ENCODE measurements at regions of chr2 and their contacts with region 1.

Region 1: DNA sequence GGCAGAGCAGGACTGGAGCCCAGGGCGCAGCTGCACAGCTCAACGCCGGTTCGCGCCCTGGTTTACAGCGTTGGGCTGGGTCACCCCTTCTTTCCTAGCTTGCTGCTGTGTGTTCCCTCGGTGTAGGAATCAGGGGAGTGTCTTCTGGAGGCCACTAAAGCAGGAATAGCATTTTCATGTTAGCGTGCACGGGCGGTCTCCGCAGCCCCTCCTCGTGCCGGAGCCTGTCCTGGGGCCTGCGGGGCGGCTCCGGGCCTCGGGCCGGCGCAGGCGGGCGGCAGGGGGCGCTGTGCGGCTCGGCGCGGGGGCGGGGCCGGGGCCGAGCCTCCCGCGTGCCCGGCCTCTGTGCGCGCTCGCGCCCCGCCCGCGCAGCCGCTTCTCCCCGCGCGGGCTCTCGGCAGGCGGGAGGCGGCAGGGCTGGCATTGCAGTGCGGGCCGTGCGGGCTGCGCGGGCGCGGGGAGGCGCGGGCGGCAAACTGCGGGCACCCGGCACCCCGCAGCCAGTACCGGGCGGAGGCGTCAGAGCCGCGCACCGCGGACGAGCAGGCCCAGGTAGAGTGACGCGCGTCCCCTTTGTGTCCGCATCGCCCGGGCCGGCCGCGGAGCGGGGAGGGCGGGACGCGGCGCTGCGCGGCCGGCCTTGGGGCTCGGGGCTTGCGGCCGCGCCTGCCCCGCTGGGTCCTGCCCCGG is at the start of gene RNF144A:
- DNase-seq: peak; percentile 32 to 63 (median 54)
- H3K4me3 ChIP-seq: peak within 1 kb of the TSS; percentile 19 to 75 (median 29)
- H3K4me3 Mint-ChIP-seq: peak within 1 kb of the TSS; percentile 74 to 85
- H3K27ac ChIP-seq: no peak within 1 kb of the TSS
- H3K27ac Mint-ChIP-seq: peak within 1 kb of the TSS in 1 of 7 donors; percentile 30
- H3K4me1 ChIP-seq: peaks cover 11 to 13% of the 10 kb centered on the region in 2 donors
- H3K4me1 Mint-ChIP-seq: peaks cover 12% of the 10 kb centered on the region
- H3K27me3 ChIP-seq: no peaks in the 10 kb centered on the region
- H3K27me3 Mint-ChIP-seq: peaks cover 1 to 15% (median 11%) of the 10 kb centered on the region in 3 donors
- CTCF ChIP-seq: peak; percentile 65
- polyA plus RNA-seq, gene RNF144A: 0.30 to 0.68 (median 0.48) TPM

Region 2: GRCh38 chr2:7007846-7008741 is 90.9 kb after region 1 on chr2:
- intact Hi-C with region 1: loop called (anchors 5 to 10 kb)
- DNase-seq: peak; percentile 62 to 79 (median 65)
- H3K4me3 ChIP-seq: peak overlapping the region in 1 of 3 experiments; percentile 58
- H3K4me3 Mint-ChIP-seq: peak overlapping the region; percentile 76 to 92
- H3K27ac ChIP-seq: peak overlapping the region; percentile 43 to 68
- H3K27ac Mint-ChIP-seq: peak overlapping the region; percentile 79 to 88 (median 87)
- H3K4me1 ChIP-seq: peaks cover 45 to 46% of the 10 kb centered on the region in 2 donors
- H3K4me1 Mint-ChIP-seq: peaks cover 58% of the 10 kb centered on the region
- H3K27me3 ChIP-seq: no peaks in the 10 kb centered on the region
- H3K27me3 Mint-ChIP-seq: peaks cover 0 to 2% (median 0%) of the 10 kb centered on the region in 3 donors
- CTCF ChIP-seq: peak; percentile 32

Measured in CD14-positive monocyte (primary cell).